Right ventricle myocardium inferior (tissue), 1 donor: ENCODE measurements at regions of chr14 and their contacts with region 1.

Region 1: DNA sequence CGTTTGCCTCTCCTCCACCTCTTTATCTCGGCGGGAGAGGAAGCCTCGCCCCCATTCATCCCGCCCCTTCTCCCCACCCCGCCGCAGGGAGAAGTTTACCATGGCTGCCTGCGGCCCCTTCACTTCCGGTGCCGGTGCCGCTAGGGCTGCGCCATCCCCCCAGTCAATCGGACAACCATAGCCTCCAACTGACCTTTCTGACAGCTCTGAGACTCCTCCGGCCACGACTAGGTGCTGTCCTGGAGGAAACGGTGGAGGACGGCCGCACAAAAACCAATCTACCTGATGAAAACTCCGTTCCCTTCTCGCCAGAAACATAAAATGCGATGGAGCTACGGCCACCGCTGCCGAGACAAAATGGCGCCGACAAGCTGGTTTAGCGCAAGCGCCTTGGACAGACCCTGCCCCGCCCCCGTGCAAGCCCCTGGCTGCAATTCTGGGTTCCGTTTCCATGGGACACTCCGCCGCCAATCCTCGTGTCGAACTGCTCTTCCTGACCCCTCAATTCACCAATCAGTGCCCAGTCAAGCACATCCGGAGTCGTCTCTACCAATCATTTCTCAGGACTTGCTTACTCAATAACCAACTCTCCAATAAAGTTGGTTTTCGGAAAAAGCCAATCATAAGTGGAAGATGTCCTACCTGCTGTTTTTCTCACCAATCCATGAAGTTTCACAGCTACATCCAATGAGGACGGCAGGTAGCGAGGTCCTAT is 436 bp upstream of the ARID4A start:
- DNase-seq: peak; percentile 98
- ATAC-seq: peak; percentile 97

Region 2: GRCh38 chr14:58014778-58015177 is 283.1 kb before region 1 on chr14:
- intact Hi-C with region 1: no loop called
- DNase-seq: no peak
- ATAC-seq: no peak

Region 3: GRCh38 chr14:58199726-58200479 is 98.0 kb before region 1 on chr14 and contains the start of gene ACTR10:
- intact Hi-C with region 1: loop called (anchors 2 kb)
- DNase-seq: peak; percentile 96
- ATAC-seq: peak; percentile 98
- total RNA-seq, gene ACTR10: 75.5 TPM

Region 4: DNA sequence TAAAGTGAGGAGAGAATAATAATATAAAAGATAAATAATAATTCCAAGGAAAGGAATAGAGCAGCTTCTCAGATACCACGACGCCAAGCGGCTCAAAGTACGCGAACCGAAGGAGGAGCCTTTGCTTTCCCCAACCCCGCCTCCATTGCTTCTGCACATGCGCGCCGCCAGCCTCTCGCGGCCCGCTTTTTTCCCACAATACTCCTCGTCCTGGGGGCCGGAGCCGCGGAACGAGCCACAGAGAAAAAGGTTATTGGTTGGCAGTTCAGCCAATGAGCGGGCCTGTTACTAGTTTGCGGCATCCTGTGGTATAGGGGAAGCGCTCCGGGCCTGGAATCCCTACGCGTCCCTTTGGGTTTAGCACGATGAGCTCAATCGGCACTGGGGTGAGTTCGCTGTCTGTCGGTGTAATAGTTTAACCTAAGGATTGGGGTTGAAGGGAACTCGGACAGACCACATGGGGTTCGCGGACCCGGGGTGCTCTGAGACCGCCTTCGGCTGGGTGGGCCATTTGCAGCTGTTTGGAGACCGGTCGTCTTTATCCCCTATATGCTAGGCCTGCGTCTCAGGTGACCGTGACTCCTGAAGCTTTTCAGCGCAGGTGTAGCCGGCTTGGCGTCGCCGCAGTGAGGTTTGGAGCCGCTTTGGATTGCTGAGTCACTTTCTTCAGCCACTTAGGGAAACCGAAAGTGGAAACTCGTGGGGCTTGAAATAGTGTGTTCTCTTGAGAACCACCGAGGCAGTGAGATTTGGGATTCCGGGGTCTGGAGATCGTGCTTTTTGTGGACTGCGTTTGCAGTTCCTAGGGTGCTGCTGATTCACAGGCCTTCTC is 53.1 kb before region 1 on chr14 and contains the start of gene PSMA3:
- intact Hi-C with region 1: loop called (anchors 2 kb)
- DNase-seq: peak; percentile 99
- ATAC-seq: peak; percentile 95
- total RNA-seq, gene PSMA3: 149 TPM

Region 5: GRCh38 chr14:58280954-58281787 is 16.7 kb before region 1 on chr14:
- intact Hi-C with region 1: loop called (anchors 2 kb)
- DNase-seq: no peak
- ATAC-seq: peak; percentile 76

Region 6: DNA sequence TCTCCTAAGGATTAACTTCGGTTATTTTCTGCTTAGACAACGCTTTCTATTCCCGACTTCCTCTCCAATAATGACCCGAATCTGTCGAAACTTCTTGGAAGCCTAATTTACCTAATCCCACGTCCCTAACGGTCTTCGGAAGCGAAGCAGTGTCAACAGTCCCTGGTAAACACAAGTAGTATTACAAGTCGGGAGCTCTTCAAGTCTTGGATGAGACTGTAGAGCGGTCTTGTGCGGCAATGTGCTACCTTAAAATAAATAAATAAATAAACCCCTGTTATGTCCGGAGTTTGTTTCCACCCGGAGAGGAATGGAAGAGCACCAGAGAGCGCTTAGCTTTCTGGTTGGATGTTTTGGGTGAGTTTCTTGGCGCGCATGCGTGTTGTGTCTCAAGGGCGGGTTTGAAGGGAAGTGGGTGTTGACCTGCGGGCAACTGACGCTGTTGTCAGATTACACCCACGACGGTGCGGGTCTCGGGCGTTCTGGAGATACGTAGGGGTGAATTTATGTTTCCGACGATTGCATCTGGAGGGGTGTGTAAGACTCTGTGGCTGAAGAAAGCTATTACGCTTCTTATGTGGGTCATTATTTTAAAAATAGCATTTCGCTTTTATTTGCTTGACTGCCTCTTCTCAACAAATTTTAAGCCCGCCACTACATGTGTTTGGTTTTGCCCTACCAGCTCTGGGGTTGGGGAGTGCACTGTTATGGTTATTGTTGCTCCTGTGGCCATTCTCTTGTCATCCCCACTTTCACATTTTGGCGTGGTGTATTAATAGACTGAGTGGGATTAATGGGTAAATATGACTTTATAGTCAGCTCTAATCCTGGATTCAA is 129.6 kb after region 1 on chr14 and contains the starts of genes KIAA0586 and TIMM9:
- intact Hi-C with region 1: loop called (anchors 5 kb)
- DNase-seq: peak; percentile 97
- ATAC-seq: peak; percentile 98
- total RNA-seq, gene KIAA0586: 11.3 TPM
- total RNA-seq, gene TIMM9: 24.1 TPM